Right lobe of liver (tissue), 6 donors: ENCODE measurements at regions of chr19 and their contacts with region 1.

Region 1: DNA sequence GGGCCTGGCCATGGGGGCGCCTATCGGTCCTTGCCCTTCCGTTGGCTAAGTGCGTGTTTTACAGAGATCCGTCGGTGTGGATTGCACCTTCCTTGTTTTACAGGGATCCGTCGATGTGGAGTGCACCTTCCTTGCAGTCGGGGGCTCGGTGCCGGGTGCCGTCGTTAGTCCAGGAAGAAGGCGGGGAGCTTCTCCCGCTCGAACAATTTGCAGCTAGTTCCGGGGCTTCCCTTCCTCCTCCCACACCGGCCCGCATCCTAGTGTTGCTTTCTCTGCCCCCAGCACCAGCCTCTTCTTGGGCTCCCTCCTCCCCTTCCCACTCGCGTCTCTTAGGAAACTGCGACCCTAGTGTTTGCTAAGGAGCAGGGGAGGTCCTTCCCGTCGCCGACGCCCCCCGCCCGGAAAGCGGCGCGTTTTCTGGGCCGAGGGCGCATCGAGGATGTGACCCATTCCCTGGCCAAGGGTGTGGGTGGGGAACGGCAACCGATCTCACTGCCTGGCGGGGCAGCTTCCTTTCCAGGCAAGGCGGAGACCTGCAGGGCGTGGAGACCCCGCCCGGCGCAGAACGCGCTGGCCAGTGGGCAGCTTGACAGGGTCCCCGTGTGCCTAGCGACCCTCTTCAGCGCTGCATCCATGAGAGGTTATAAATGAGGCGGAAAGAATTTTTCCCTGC is 75.7 kb upstream of the ZNF91 start:
- DNase-seq: no peak
- ATAC-seq: no peak
- H3K4me3 ChIP-seq: no peak overlapping the region
- H3K27ac ChIP-seq: no peak overlapping the region
- H3K4me1 ChIP-seq: no peaks in the 10 kb centered on the region
- H3K27me3 ChIP-seq: no peaks in the 10 kb centered on the region
- CTCF ChIP-seq: no peak
- POLR2A ChIP-seq: no peak

Region 2: GRCh38 chr19:23305555-23305954 is 165.5 kb before region 1 on chr19:
- intact Hi-C with region 1: no loop called
- DNase-seq: no peak
- ATAC-seq: peak in 3 of 4 donors; percentile 33 to 44 (median 38)
- H3K4me3 ChIP-seq: no peak overlapping the region
- H3K27ac ChIP-seq: no peak overlapping the region
- H3K4me1 ChIP-seq: no peaks in the 10 kb centered on the region
- H3K27me3 ChIP-seq: no peaks in the 10 kb centered on the region
- CTCF ChIP-seq: peak in 2 of 4 donors; percentile 25 to 27
- POLR2A ChIP-seq: no peak

Region 3: DNA sequence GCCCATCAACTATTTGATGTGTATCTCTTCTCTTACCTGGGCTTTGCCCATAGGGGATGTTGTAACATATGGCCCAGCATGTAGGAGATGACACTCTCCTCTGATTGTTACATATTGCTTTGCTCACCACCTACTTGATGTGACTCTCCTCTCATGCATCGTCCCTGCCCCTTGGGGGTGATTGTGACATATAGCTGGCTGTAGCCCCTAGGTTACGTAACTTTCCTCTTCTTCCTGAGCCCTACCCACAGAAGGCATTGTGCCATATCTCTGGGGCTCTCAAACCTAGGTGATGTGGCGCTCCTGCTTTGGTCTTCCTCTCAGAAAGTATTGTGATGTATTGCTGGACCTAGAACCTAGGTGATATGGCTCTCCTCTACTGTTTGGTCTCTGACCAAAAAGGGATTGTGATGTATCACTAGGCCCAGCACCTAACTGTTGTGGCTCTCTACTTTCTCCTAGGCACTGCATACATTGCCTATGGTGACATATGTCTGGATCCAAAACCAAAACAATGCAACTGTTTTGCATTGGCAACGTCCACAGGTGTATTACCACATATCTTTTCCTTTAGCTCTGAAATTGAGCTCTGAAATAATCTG is 149.0 kb before region 1 on chr19:
- intact Hi-C with region 1: loop called (anchors 5 kb)
- DNase-seq: no peak
- ATAC-seq: no peak
- H3K4me3 ChIP-seq: no peak overlapping the region
- H3K27ac ChIP-seq: no peak overlapping the region
- H3K4me1 ChIP-seq: no peaks in the 10 kb centered on the region
- H3K27me3 ChIP-seq: no peaks in the 10 kb centered on the region
- CTCF ChIP-seq: no peak
- POLR2A ChIP-seq: no peak